ENCODE measurements at regions of chr20 and their contacts with region 1.

Region 1: GRCh38 chr20:37396416-37397075 is 50.6 kb downstream of the SRC start:
- DNase-seq: peak; percentile 89
- ATAC-seq: peak; percentile 76
- H3K4me3 Mint-ChIP-seq: peak overlapping the region; percentile 65
- H3K27ac Mint-ChIP-seq: peak overlapping the region; percentile 99; the same call in 1 of the 2 replicates
- H3K4me1 Mint-ChIP-seq: peaks cover 33% of the 10 kb centered on the region
- H3K27me3 Mint-ChIP-seq: no peaks in the 10 kb centered on the region
- CTCF ChIP-seq: no peak

Region 2: GRCh38 chr20:37282556-37282955 is 114.0 kb before region 1 on chr20:
- CTCF ChIA-PET with region 1: interaction called, 10 read pairs
- POLR2A ChIA-PET with region 1: interaction called, 4 read pairs
- DNase-seq: no peak
- ATAC-seq: peak; percentile 61
- H3K4me3 Mint-ChIP-seq: no peak overlapping the region
- H3K27ac Mint-ChIP-seq: peak overlapping the region; percentile 37; the same call in 1 of the 2 replicates
- H3K4me1 Mint-ChIP-seq: peaks cover 16% of the 10 kb centered on the region
- H3K27me3 Mint-ChIP-seq: peaks cover 14% of the 10 kb centered on the region
- CTCF ChIP-seq: no peak

Region 3: DNA sequence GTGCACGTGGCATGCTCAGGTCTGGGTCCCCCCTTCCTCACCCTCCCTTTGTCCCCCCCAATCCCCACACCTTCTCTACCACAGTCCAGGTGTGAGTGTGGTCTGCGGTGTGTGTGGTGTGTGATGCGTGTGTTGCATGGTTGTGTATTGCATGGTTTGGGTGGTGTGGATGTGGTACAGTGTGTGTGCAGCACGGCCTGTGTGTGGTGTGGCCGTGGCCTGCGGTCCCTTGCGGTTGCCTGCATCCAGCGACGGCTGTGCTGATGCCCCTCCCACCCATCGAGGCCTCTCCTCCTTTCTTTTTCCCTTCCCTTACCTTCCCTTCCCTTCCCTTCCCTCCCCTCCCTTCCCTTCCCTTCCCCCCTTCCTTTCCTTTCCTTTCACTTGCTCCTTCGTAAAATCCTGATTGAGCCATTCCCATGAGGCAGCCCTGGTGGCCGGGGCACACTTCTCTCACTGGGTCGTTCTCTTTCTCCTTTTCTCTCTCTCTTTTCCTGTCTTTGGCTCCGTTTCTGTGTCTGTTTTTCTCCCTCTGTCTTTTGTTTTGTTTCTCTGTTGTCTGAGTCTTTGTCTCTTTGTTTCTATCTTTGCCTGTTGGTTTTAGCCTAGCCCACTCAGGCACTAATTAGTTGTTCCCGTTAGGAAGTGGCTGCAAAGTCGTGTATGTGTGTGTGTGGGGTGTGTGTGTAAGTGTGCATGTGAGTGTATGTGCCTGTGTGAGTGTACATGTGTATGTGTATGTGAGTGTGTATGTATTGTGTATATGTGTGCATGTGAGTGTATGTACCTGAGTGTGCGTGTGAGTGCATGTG is 15.1 kb after region 1 on chr20:
- CTCF ChIA-PET with region 1: interaction called, 13 read pairs
- POLR2A ChIA-PET with region 1: interaction called, 4 read pairs
- DNase-seq: no peak
- ATAC-seq: peak; percentile 30
- H3K4me3 Mint-ChIP-seq: no peak overlapping the region
- H3K27ac Mint-ChIP-seq: no peak overlapping the region
- H3K4me1 Mint-ChIP-seq: peaks cover 40% of the 10 kb centered on the region
- H3K27me3 Mint-ChIP-seq: peaks cover 18% of the 10 kb centered on the region
- CTCF ChIP-seq: no peak

Region 4: GRCh38 chr20:37519508-37520128 is 123.1 kb after region 1 on chr20:
- CTCF ChIA-PET with region 1: interaction called, 15 read pairs
- POLR2A ChIA-PET with region 1: interaction called, 6 read pairs
- DNase-seq: peak; percentile 31
- ATAC-seq: no peak; the same call in 1 of the 2 replicates
- H3K4me3 Mint-ChIP-seq: peak overlapping the region; percentile 75
- H3K27ac Mint-ChIP-seq: peak overlapping the region; percentile 73
- H3K4me1 Mint-ChIP-seq: peaks cover 78% of the 10 kb centered on the region
- H3K27me3 Mint-ChIP-seq: no peaks in the 10 kb centered on the region; the same call in 1 of the 2 replicates
- CTCF ChIP-seq: no peak

Region 5: GRCh38 chr20:37534401-37535157 is 138.0 kb after region 1 on chr20:
- CTCF ChIA-PET with region 1: interaction called, 28 read pairs
- POLR2A ChIA-PET with region 1: interaction called, 3 read pairs
- DNase-seq: no peak
- ATAC-seq: peak; percentile 89
- H3K4me3 Mint-ChIP-seq: no peak overlapping the region
- H3K27ac Mint-ChIP-seq: no peak overlapping the region
- H3K4me1 Mint-ChIP-seq: peaks cover 20% of the 10 kb centered on the region
- H3K27me3 Mint-ChIP-seq: no peaks in the 10 kb centered on the region
- CTCF ChIP-seq: peak; percentile 80

Measured in WTC11 (cell line).